Breast epithelium (tissue), 4 donors: ENCODE measurements at regions of chr3 and their contacts with region 1.

Region 1: DNA sequence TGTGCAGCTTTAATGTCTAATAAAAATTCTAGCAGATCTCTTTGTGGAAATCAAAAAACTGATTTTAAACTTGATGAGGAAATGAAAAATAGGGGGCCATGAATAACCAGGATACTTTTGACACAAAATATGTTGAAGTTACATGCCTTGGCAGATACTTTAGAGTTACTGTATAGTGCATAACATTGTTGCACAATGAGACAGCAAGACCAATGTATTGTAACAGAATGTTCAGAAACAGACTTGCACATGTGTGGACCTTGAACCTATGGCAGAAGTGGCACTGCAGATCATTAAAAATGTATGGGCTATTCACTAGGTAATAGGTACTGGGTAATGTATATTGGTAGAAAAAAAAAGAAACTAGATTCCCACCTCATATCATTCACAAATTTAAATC is 343.0 kb upstream of the ARL6 start:
- DNase-seq: no peak
- H3K4me3 ChIP-seq: no peak overlapping the region
- H3K27ac ChIP-seq: no peak overlapping the region
- H3K4me1 ChIP-seq: no peaks in the 10 kb centered on the region
- H3K27me3 ChIP-seq: no peaks in the 10 kb centered on the region
- CTCF ChIP-seq: no peak
- POLR2A ChIP-seq: no peak

Region 2: DNA sequence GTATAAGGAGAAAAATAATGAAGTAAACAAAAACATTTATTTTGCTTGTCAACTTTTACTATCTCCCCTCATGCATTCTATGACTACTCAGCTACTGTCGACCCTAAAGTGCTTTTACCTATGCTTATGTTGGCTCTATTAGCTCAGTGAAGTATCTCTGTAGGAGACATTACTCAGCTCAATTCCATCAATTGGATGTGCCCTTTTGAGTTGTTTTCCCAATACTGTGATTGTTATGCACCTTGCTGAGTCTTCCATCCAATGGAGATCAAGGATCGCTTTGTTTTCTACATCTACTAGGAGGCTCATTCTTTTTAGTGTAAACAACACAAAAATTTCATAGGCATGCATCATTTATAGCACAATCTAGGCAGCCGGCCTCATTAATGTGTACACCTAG is 60.8 kb before region 1 on chr3:
- intact Hi-C with region 1: loop called (anchors 2 kb)
- DNase-seq: no peak
- H3K4me3 ChIP-seq: no peak overlapping the region
- H3K27ac ChIP-seq: no peak overlapping the region
- H3K4me1 ChIP-seq: no peaks in the 10 kb centered on the region
- H3K27me3 ChIP-seq: no peaks in the 10 kb centered on the region
- CTCF ChIP-seq: no peak
- POLR2A ChIP-seq: no peak